HepG2 (cell line): ENCODE measurements at regions of chr19 and their contacts with region 1.

Region 1: GRCh38 chr19:39435499-39436349 is at the start of gene RPS16:
- DNase-seq: peak; percentile 94
- ATAC-seq: peak; percentile 89
- H3K4me3 ChIP-seq: peak within 1 kb of the TSS; percentile 91 to 100 (median 99)
- H3K27ac ChIP-seq: peak within 1 kb of the TSS; percentile 88
- H3K4me1 ChIP-seq: peaks cover 76% of the 10 kb centered on the region
- H3K27me3 ChIP-seq: no peaks in the 10 kb centered on the region; a peak in 1 of 5 replicates
- CTCF ChIP-seq: peak; percentile 18; the same call in 1 of the 2 replicates
- EP300 ChIP-seq: peak; percentile 13 to 31; a peak in 2 of 4 replicates
- POLR2A ChIP-seq: peak; percentile 98
- RAD21 ChIP-seq: no peak; the same call in none of the 2 replicates
- total RNA-seq, gene RPS16: 488 and 790 TPM in 2 replicates

Region 2: GRCh38 chr19:39254531-39255345 is 181.0 kb before region 1 on chr19:
- CTCF ChIA-PET with region 1: no interaction called
- POLR2A ChIA-PET with region 1: no interaction called
- in situ Hi-C with region 1: no loop called
- intact Hi-C with region 1: no loop called
- DNase-seq: no peak
- ATAC-seq: peak; percentile 65
- H3K4me3 ChIP-seq: no peak overlapping the region
- H3K27ac ChIP-seq: no peak overlapping the region
- H3K4me1 ChIP-seq: peaks cover 10% of the 10 kb centered on the region
- H3K27me3 ChIP-seq: peaks cover 0 to 6% of the 10 kb centered on the region in 2 experiments; a peak in 2 of 5 replicates
- CTCF ChIP-seq: no peak
- EP300 ChIP-seq: no peak
- POLR2A ChIP-seq: no peak
- RAD21 ChIP-seq: no peak

Region 3: GRCh38 chr19:39341719-39342604 is 93.8 kb before region 1 on chr19 and contains the start of gene SAMD4B:
- CTCF ChIA-PET with region 1: no interaction called
- POLR2A ChIA-PET with region 1: interaction called, 10 read pairs
- in situ Hi-C with region 1: no loop called
- intact Hi-C with region 1: no loop called
- DNase-seq: peak; percentile 92
- ATAC-seq: peak; percentile 94
- H3K4me3 ChIP-seq: peak within 1 kb of the TSS; percentile 84 to 94 (median 88)
- H3K27ac ChIP-seq: peak within 1 kb of the TSS; percentile 74
- H3K4me1 ChIP-seq: peaks cover 69% of the 10 kb centered on the region
- H3K27me3 ChIP-seq: no peaks in the 10 kb centered on the region; a peak in 1 of 5 replicates
- CTCF ChIP-seq: peak; percentile 86
- EP300 ChIP-seq: 0 out of 4 replicates have a peak, but pooled peaks of 1 of the 2 experiments have one; percentile 20
- POLR2A ChIP-seq: peak; percentile 90 to 96
- RAD21 ChIP-seq: peak; percentile 49
- total RNA-seq, gene SAMD4B: 26.0 and 29.1 TPM in 2 replicates

Region 4: DNA sequence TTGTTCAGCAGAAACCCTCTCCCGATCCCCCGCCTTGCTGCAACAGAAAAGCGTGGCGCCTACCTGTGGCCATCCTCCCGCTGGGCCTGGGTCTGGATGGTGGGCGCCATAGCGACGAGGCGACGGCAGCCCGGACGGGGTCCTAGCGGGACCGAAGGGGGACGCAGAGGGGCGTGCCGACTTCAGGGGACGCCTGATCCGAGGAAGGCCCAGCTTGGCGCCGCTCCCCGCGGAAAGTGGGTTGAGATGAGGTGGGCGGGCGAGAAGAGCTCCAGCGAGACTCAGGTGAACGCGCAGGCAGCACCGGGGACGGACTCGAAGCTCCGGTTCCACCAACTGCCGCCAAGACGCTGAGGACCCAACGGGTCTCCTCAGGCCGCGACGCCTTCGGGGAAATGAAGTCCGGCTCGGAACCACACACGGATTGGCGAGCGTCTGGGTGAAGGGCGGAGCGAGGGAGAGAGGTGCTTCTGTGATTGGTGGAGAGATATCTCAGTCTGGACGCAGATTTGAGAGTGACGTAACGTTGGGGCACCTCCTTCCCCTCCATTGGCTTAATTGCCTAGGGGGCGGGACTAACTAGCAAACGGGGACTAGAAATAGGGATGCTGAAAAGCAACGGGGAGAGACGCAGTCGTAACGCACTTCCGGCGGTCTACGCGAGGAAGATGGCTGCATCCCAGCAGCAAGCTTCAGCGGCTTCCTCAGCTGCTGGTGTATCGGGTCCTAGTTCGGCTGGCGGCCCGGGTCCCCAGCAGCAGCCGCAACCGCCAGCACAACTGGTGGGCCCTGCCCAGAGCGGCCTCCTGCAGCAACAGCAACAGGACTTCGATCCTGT is 44.8 kb before region 1 on chr19 and contains the starts of genes MED29 and PAF1:
- CTCF ChIA-PET with region 1: no interaction called
- POLR2A ChIA-PET with region 1: interaction called, 49 read pairs
- in situ Hi-C with region 1: no loop called
- intact Hi-C with region 1: no loop called
- DNase-seq: peak; percentile 99
- ATAC-seq: peak; percentile 96
- H3K4me3 ChIP-seq: peak within 1 kb of the TSS; percentile 92 to 96 (median 95)
- H3K27ac ChIP-seq: peak within 1 kb of the TSS; percentile 86
- H3K4me1 ChIP-seq: peaks cover 22% of the 10 kb centered on the region
- H3K27me3 ChIP-seq: no peaks in the 10 kb centered on the region
- CTCF ChIP-seq: peak; percentile 57
- EP300 ChIP-seq: no peak
- POLR2A ChIP-seq: peak; percentile 98
- RAD21 ChIP-seq: 0 out of 2 replicates have a peak, but pooled peaks have one; percentile 16
- total RNA-seq, gene MED29: 14.0 and 18.1 TPM in 2 replicates
- total RNA-seq, gene PAF1: 30.2 and 31.0 TPM in 2 replicates

Region 5: GRCh38 chr19:39397360-39398296 is 38.1 kb before region 1 on chr19:
- CTCF ChIA-PET with region 1: no interaction called
- POLR2A ChIA-PET with region 1: interaction called, 52 read pairs
- in situ Hi-C with region 1: no loop called
- intact Hi-C with region 1: no loop called
- DNase-seq: peak; percentile 95
- ATAC-seq: peak; percentile 72
- H3K4me3 ChIP-seq: peak overlapping the region; percentile 29 to 57 (median 34)
- H3K27ac ChIP-seq: peak overlapping the region; percentile 98
- H3K4me1 ChIP-seq: peaks cover 59% of the 10 kb centered on the region
- H3K27me3 ChIP-seq: no peaks in the 10 kb centered on the region
- CTCF ChIP-seq: peak; percentile 100
- EP300 ChIP-seq: peak; percentile 45 to 66; a peak in 3 of 4 replicates
- POLR2A ChIP-seq: peak; percentile 89 to 95
- RAD21 ChIP-seq: peak; percentile 100

Region 6: GRCh38 chr19:39403331-39404312 is 32.1 kb before region 1 on chr19:
- CTCF ChIA-PET with region 1: no interaction called
- POLR2A ChIA-PET with region 1: interaction called, 52 read pairs
- in situ Hi-C with region 1: no loop called
- intact Hi-C with region 1: no loop called
- DNase-seq: no peak
- ATAC-seq: no peak
- H3K4me3 ChIP-seq: no peak overlapping the region
- H3K27ac ChIP-seq: peak overlapping the region; percentile 98
- H3K4me1 ChIP-seq: peaks cover 68% of the 10 kb centered on the region
- H3K27me3 ChIP-seq: no peaks in the 10 kb centered on the region; a peak in 1 of 5 replicates
- CTCF ChIP-seq: no peak
- EP300 ChIP-seq: no peak
- POLR2A ChIP-seq: no peak
- RAD21 ChIP-seq: no peak

Region 7: DNA sequence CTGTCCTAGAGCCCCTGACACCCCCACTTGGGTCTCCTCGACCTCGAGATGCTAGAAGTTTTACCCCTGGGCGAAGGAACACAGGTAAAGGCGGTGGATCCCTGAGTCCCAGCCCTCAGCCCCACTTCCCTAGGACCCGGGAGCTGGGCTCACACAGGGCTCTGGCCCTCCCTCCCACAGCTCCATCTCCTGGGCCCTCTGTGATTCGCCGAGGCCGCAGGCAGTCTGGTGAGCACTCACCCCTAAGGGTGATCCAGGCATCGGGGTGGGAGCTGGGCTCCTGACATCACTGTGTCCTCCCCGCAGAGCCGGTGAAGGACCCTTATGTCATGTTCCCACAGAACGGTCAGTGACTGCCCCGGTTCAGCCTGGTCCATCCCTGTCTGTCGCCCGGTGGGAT is 15.0 kb before region 1 on chr19:
- CTCF ChIA-PET with region 1: no interaction called
- POLR2A ChIA-PET with region 1: interaction called, 44 read pairs
- in situ Hi-C with region 1: no loop called
- intact Hi-C with region 1: no loop called
- DNase-seq: no peak
- ATAC-seq: no peak
- H3K4me3 ChIP-seq: no peak overlapping the region
- H3K27ac ChIP-seq: no peak overlapping the region
- H3K4me1 ChIP-seq: peaks cover 13% of the 10 kb centered on the region; the same call in 1 of the 2 replicates
- H3K27me3 ChIP-seq: no peaks in the 10 kb centered on the region
- CTCF ChIP-seq: no peak
- EP300 ChIP-seq: no peak
- POLR2A ChIP-seq: no peak
- RAD21 ChIP-seq: no peak

Region 8: GRCh38 chr19:39463403-39463802 is 27.7 kb after region 1 on chr19:
- CTCF ChIA-PET with region 1: no interaction called
- POLR2A ChIA-PET with region 1: no interaction called
- in situ Hi-C with region 1: no loop called
- intact Hi-C with region 1: no loop called
- DNase-seq: no peak
- ATAC-seq: no peak
- H3K4me3 ChIP-seq: no peak overlapping the region
- H3K27ac ChIP-seq: no peak overlapping the region
- H3K4me1 ChIP-seq: no peaks in the 10 kb centered on the region
- H3K27me3 ChIP-seq: no peaks in the 10 kb centered on the region
- CTCF ChIP-seq: no peak
- EP300 ChIP-seq: no peak
- POLR2A ChIP-seq: no peak
- RAD21 ChIP-seq: no peak